Heart left ventricle (tissue), 16 donors: ENCODE measurements at regions of chr14 and their contacts with region 1.

Region 1: GRCh38 chr14:66403183-66403582 is 83.0 kb upstream of the CCDC196 start:
- DNase-seq: no peak
- ATAC-seq: peak in 3 of 4 donors; percentile 37 to 50 (median 50)
- H3K4me3 ChIP-seq: no peak overlapping the region
- H3K27ac ChIP-seq: no peak overlapping the region
- H3K4me1 ChIP-seq: peaks cover 0 to 9% (median 0%) of the 10 kb centered on the region in 12 donors
- H3K27me3 ChIP-seq: no peaks in the 10 kb centered on the region
- CTCF ChIP-seq: peak in 9 of 12 donors; percentile 18 to 50 (median 46)
- POLR2A ChIP-seq: no peak

Region 2: DNA sequence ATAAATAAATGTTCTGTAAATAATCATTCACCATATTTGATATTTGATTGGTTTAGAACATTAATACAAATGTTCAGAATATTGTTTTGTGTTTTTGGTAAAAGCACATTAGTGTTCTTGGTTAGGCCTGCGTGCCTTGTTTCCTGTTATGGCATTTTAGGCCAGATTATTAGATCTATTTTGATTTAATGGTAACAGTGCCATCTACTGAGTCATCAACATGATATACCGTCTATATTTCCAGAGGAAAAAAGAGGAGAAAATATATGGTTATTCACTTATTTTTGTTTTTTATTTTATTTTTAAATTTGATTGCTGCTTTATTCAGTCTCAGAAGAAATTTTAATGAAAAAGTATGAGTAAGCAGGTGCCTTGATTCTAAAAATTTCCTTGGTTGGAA is 165.0 kb after region 1 on chr14:
- intact Hi-C with region 1: loop called in 1 of 10 experiments (anchors 10 kb)
- DNase-seq: no peak
- ATAC-seq: no peak
- H3K4me3 ChIP-seq: no peak overlapping the region
- H3K27ac ChIP-seq: no peak overlapping the region
- H3K4me1 ChIP-seq: peaks cover 0 to 21% (median 4%) of the 10 kb centered on the region in 12 donors
- H3K27me3 ChIP-seq: no peaks in the 10 kb centered on the region
- CTCF ChIP-seq: peak in 3 of 12 donors; percentile 23 to 30 (median 25)
- POLR2A ChIP-seq: no peak

Region 3: GRCh38 chr14:66746316-66747006 is 343.3 kb after region 1 on chr14:
- intact Hi-C with region 1: loop called in 1 of 10 experiments (anchors 5 kb)
- DNase-seq: no peak
- ATAC-seq: peak in 3 of 4 donors; percentile 41 to 74 (median 48)
- H3K4me3 ChIP-seq: no peak overlapping the region
- H3K27ac ChIP-seq: no peak overlapping the region
- H3K4me1 ChIP-seq: peaks cover 0 to 23% (median 3%) of the 10 kb centered on the region in 12 donors
- H3K27me3 ChIP-seq: no peaks in the 10 kb centered on the region
- CTCF ChIP-seq: peak; percentile 40 to 66 (median 52)
- POLR2A ChIP-seq: no peak